Calu3 (cell line): ENCODE measurements at regions of chr5 and their contacts with region 1.

Region 1: DNA sequence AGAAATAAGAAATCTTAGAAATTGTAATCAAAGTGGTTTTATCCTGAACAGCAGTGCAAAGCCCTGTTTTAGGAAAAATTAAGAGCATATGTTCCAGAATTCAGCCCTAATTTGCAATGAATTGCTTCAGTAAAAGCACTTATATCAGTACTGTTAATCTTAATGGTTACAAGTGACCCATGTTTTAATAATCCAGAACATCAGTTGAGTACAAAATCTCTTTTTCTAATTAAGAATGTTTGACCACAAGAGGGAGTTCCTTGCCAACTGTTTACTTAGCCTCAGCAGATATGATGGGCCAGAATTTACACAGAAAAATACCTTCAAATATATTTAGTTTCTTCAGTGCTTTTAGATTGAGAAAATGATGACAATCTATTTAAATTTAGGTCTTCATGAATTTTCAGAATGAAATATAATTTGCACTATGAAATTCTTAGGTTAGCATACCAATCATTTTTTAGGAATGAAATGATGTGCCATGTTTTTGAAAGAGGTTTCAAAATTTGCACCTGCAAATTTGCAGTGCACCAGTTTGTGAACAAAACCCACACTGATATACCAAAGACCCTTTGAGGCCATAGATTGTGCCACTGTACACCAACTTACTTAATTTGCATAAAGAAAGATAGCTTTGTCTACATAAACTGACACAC is 926.3 kb upstream of the ARRDC3 start:
- DNase-seq: no peak
- H3K4me3 Mint-ChIP-seq: no peak overlapping the region
- H3K27ac Mint-ChIP-seq: no peak overlapping the region
- H3K4me1 Mint-ChIP-seq: peaks cover 8% of the 10 kb centered on the region
- H3K27me3 Mint-ChIP-seq: no peaks in the 10 kb centered on the region
- CTCF ChIP-seq: peak; percentile 31

Region 2: GRCh38 chr5:91641730-91642350 is 667.6 kb before region 1 on chr5:
- CTCF ChIA-PET with region 1: no interaction called
- intact Hi-C with region 1: loop called (anchors 5 kb)
- DNase-seq: no peak
- H3K4me3 Mint-ChIP-seq: no peak overlapping the region
- H3K27ac Mint-ChIP-seq: no peak overlapping the region
- H3K4me1 Mint-ChIP-seq: no peaks in the 10 kb centered on the region
- H3K27me3 Mint-ChIP-seq: no peaks in the 10 kb centered on the region
- CTCF ChIP-seq: peak; percentile 70

Region 3: DNA sequence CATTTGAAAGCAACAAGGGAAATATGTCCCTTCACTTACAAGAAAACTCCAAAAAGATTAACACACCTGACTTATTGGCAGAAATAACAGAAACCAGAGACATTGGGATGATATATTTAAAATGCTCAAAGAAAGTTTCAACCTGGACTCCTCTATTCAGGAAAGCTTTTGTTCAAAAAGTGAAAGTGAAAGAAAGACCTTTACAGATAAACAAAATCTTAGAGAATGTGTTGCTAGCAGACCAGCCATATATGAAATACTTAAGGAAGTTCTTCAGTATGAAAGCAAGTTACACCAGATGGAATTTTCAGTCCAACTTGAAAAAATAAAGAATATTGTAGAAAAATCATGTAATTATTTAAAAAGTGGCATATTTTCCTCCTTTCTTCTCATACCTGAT is 196.5 kb after region 1 on chr5:
- CTCF ChIA-PET with region 1: no interaction called
- intact Hi-C with region 1: loop called (anchors 2 kb)
- DNase-seq: no peak
- H3K4me3 Mint-ChIP-seq: peak overlapping the region; percentile 20
- H3K27ac Mint-ChIP-seq: no peak overlapping the region
- H3K4me1 Mint-ChIP-seq: peaks cover 18% of the 10 kb centered on the region
- H3K27me3 Mint-ChIP-seq: no peaks in the 10 kb centered on the region
- CTCF ChIP-seq: no peak

Region 4: GRCh38 chr5:92678640-92679039 is 369.2 kb after region 1 on chr5:
- CTCF ChIA-PET with region 1: no interaction called
- intact Hi-C with region 1: loop called (anchors 10 kb)
- DNase-seq: peak; percentile 45
- H3K4me3 Mint-ChIP-seq: no peak overlapping the region
- H3K27ac Mint-ChIP-seq: no peak overlapping the region
- H3K4me1 Mint-ChIP-seq: no peaks in the 10 kb centered on the region
- H3K27me3 Mint-ChIP-seq: no peaks in the 10 kb centered on the region
- CTCF ChIP-seq: no peak

Region 5: DNA sequence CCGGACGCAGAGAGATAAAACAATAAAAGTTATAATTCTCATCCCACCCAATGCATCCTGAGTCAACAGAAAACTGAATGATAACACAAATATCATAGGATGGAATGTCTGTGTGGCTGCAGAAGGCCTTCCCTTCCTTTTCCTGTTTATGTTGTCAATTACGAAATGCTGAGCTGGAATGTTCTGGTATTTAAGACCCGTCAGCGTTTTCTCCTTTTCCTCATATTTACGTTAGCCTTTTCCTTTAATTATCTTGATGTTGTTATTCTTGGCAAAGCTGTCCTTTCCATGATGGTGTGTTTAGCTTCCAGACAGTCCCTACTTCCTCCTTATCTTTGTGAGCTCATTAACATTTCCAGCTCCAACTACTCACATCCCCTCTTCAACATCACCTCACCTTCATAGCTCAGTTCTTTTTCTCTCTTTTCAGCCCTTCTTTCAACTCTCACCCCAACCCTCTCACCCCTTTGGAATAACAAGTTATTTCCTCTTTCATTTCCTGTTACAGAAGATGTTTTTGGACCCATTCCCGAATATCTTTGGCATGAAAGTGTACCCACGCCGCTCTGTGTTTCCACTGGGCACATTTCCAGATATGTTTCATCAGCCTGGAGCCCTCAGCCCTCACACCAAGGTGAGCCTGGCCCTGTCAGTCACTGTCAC is 1050.0 kb after region 1 on chr5:
- CTCF ChIA-PET with region 1: no interaction called
- intact Hi-C with region 1: no loop called
- DNase-seq: peak; percentile 48
- H3K4me3 Mint-ChIP-seq: peak overlapping the region; percentile 39
- H3K27ac Mint-ChIP-seq: peak overlapping the region; percentile 65
- H3K4me1 Mint-ChIP-seq: peaks cover 30% of the 10 kb centered on the region
- H3K27me3 Mint-ChIP-seq: no peaks in the 10 kb centered on the region
- CTCF ChIP-seq: no peak

Region 6: GRCh38 chr5:93800988-93801811 is 1491.7 kb after region 1 on chr5:
- CTCF ChIA-PET with region 1: no interaction called
- intact Hi-C with region 1: loop called (anchors 10 kb)
- DNase-seq: peak; percentile 58
- H3K4me3 Mint-ChIP-seq: no peak overlapping the region
- H3K27ac Mint-ChIP-seq: peak overlapping the region; percentile 55
- H3K4me1 Mint-ChIP-seq: peaks cover 15% of the 10 kb centered on the region
- H3K27me3 Mint-ChIP-seq: no peaks in the 10 kb centered on the region
- CTCF ChIP-seq: peak; percentile 84